Activated CD4-positive, alpha-beta T cell treated with anti-CD3 and anti-CD28 coated beads, Interleukin-2, amount 10 ng/mL, durations not matched to agents 24 days and 14 days (primary cell): ENCODE measurements at regions of chr2 and their contacts with region 1.

Region 1: GRCh38 chr2:39436592-39437510 is at the start of gene MAP4K3:
- DNase-seq: peak; percentile 93
- H3K4me3 Mint-ChIP-seq: peak within 1 kb of the TSS; percentile 91
- H3K27ac Mint-ChIP-seq: peak within 1 kb of the TSS; percentile 90
- H3K4me1 Mint-ChIP-seq: peaks cover 44% of the 10 kb centered on the region
- H3K27me3 Mint-ChIP-seq: no peaks in the 10 kb centered on the region
- total RNA-seq, gene MAP4K3: 12.9 and 16.6 TPM in 2 replicates

Region 2: GRCh38 chr2:39394516-39394961 is 42.3 kb before region 1 on chr2:
- intact Hi-C with region 1: no loop called
- DNase-seq: no peak
- H3K4me3 Mint-ChIP-seq: no peak overlapping the region
- H3K27ac Mint-ChIP-seq: no peak overlapping the region
- H3K4me1 Mint-ChIP-seq: no peaks in the 10 kb centered on the region
- H3K27me3 Mint-ChIP-seq: no peaks in the 10 kb centered on the region

Region 3: GRCh38 chr2:39419282-39420223 is 17.3 kb before region 1 on chr2:
- intact Hi-C with region 1: loop called (anchors 2 kb)
- DNase-seq: no peak
- H3K4me3 Mint-ChIP-seq: no peak overlapping the region
- H3K27ac Mint-ChIP-seq: no peak overlapping the region
- H3K4me1 Mint-ChIP-seq: peaks cover 19% of the 10 kb centered on the region
- H3K27me3 Mint-ChIP-seq: no peaks in the 10 kb centered on the region

Region 4: DNA sequence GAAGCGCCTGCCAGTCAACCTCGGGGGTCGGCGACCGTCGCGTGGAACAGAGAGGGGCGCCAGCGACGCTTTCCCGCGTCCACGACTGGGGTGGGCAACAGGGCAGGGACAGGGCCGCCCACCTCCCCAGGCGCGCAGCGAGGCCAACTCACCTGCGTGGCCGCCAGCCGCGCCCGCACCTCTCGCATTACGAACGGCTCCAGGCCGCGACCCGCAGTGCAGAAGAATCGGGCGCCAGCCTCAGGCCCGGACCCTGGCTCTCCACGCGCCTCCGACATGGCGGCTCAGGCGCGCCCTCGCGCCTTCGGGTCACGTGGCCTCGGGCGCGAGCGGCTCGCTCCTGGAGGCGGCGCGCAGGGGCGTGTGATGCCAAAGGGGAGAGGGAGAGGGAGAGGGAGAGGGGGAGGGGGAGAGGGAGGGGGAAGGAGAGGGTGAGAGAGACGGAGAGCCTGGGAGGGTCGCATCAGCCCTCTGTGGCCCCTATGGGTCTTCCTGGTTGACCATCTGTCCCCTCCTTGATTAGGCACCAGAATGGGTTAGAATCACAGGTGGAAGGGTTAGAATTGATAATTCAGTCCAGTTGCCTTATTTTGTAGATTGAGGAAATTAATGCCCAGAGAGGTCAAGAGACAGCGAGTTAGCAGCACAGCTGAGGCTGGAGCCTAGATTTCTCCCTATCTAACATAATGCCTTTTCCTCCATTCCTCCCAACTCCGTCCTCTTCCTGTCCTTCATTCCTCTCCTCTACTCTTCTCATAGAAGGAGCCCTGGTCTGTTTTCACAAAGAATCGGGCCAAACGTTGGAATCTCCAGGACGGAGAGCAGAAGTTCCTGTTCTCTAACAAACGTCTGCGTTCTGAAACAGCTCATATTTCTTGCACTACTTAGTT is 342.4 kb after region 1 on chr2 and contains the start of gene THUMPD2:
- intact Hi-C with region 1: loop called (anchors 2 kb)
- DNase-seq: peak; percentile 91
- H3K4me3 Mint-ChIP-seq: peak within 1 kb of the TSS; percentile 93
- H3K27ac Mint-ChIP-seq: peak within 1 kb of the TSS; percentile 92
- H3K4me1 Mint-ChIP-seq: peaks cover 39% of the 10 kb centered on the region
- H3K27me3 Mint-ChIP-seq: peaks cover 1% of the 10 kb centered on the region
- total RNA-seq, gene THUMPD2: 19.2 and 20.5 TPM in 2 replicates